ENCODE measurements at regions of chr11 and their contacts with region 1.

Region 1: DNA sequence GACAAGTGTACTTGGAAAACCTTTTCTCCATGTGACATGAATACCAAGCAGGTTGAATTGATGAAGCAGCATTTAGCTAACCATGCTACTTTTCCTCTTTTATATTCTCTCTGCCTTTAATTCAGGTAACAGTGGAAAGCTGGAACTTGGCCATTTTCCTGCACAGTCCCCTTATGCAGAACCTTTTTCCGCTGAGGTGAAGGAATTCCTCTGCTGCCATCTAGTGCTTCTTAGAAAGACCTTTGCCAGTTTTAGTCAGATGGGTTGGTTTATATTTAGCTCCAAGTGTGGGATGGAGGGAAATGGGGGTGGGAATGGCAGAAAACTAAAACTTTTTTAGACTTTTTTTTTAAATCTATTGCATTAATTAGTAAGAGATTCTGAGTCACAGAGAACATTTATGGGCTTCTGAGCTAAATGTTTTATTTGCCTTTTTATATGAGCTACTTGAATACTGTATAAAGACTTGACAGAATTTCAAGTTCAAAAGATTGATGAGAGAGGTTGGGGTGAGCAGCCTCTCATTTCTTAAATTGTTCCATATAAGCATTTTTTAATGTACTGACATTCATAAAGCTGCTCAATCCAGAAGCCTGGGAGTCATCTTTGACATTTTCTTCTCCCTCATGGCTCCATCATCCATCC is 153.9 kb upstream of the ZC3H12C start:
- DNase-seq: peak; percentile 86
- H3K4me3 Mint-ChIP-seq: no peak overlapping the region
- H3K27ac Mint-ChIP-seq: no peak overlapping the region
- H3K4me1 Mint-ChIP-seq: peaks cover 14% of the 10 kb centered on the region
- H3K27me3 Mint-ChIP-seq: no peaks in the 10 kb centered on the region
- CTCF ChIP-seq: peak; percentile 64

Region 2: GRCh38 chr11:108654994-108655631 is 1284.2 kb before region 1 on chr11:
- CTCF ChIA-PET with region 1: interaction called, 5 read pairs
- POLR2A ChIA-PET with region 1: no interaction called
- intact Hi-C with region 1: loop called (anchors 2 kb)
- DNase-seq: peak; percentile 74
- H3K4me3 Mint-ChIP-seq: no peak overlapping the region
- H3K27ac Mint-ChIP-seq: no peak overlapping the region
- H3K4me1 Mint-ChIP-seq: no peaks in the 10 kb centered on the region
- H3K27me3 Mint-ChIP-seq: no peaks in the 10 kb centered on the region
- CTCF ChIP-seq: peak; percentile 79

Region 3: DNA sequence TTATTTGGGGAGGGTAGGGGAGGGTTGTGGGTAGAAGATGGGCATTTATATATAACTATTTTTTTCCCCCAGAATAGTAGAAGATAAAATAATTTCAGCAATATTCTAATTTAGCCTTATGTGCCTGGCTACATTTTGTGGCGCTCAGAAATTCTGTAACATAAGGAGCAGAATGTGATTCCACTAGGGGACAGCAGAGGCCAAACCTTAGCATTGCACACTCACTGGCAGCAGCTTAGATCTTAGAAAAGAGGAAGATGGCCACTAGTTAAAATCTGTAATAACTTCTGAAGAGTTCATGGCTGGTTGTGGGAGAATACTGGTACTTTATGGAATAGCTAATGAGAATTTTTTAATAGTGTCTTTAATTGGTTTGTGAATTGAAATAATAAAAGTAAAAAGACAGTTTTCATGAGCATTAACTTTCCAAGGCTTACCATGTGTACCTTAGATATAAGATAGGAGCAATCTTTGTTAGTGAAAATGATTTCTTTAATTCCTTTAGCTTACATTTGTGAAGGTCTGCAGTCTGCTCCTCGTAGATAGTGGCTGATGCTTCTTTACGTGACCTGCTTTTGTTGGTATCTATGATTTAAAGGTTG is 1241.3 kb before region 1 on chr11:
- CTCF ChIA-PET with region 1: interaction called, 40 read pairs
- POLR2A ChIA-PET with region 1: interaction called, 34 read pairs
- intact Hi-C with region 1: loop called (anchors 1 kb)
- DNase-seq: peak; percentile 78
- H3K4me3 Mint-ChIP-seq: no peak overlapping the region
- H3K27ac Mint-ChIP-seq: peak overlapping the region; percentile 82
- H3K4me1 Mint-ChIP-seq: peaks cover 17% of the 10 kb centered on the region
- H3K27me3 Mint-ChIP-seq: no peaks in the 10 kb centered on the region
- CTCF ChIP-seq: peak; percentile 93

Region 4: DNA sequence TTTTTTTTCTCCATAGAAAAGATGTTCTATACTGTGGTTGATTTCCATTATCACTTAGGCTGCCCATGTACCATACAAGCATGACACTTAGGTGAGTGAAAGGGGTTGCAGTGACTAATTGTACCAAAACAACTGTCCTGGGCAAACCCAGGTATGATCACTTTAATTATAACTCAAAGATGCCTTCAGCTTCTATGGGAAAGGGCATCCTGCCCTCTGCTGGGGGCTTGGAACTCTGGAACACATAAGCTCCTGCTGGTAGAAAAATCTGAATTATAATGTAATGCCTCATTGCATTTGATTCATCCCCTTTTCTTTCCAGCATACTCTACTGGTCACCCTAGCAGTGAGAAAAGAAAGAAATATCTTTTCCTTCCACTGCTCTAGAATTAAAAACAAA is 1068.1 kb before region 1 on chr11:
- CTCF ChIA-PET with region 1: interaction called, 5 read pairs
- POLR2A ChIA-PET with region 1: no interaction called
- intact Hi-C with region 1: loop called (anchors 5 kb)
- DNase-seq: peak; percentile 67
- H3K4me3 Mint-ChIP-seq: no peak overlapping the region
- H3K27ac Mint-ChIP-seq: peak overlapping the region; percentile 29
- H3K4me1 Mint-ChIP-seq: peaks cover 32% of the 10 kb centered on the region
- H3K27me3 Mint-ChIP-seq: no peaks in the 10 kb centered on the region
- CTCF ChIP-seq: peak; percentile 53

Region 5: DNA sequence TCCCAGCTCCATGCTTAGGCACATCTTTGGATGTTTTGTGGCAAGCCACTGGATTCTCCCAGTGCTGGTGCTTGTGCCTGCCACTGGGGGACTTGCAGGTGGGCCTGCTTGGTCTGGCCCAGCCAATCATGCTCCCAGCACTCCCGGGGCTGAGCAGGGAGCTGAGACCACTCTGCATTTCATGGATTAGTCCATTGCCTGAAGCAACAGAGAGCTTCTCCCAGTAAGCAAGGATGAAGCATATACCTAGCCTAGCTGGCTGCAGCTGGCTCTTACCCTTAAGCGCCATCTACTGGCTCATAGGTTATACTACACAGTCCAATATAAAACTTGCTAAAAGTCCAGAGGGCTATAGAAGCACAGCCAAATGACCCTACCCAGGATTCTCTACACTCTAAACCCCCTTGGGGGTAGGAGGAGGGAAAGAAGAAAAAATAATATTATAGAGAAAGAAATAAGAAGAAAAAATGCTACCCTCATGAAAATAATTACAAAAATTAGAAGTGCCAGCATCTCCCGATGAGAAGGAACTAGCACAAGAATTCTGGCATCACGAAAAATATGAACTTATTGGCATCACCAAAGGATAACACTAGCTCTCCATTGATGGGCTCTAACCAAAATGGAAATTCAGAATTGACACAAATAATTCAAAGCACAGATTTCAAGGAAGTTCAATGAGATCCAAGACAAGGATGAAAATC is 242.0 kb before region 1 on chr11:
- CTCF ChIA-PET with region 1: no interaction called
- POLR2A ChIA-PET with region 1: no interaction called
- intact Hi-C with region 1: loop called (anchors 5 kb)
- DNase-seq: peak; percentile 69
- H3K4me3 Mint-ChIP-seq: no peak overlapping the region
- H3K27ac Mint-ChIP-seq: peak overlapping the region; percentile 72
- H3K4me1 Mint-ChIP-seq: peaks cover 6% of the 10 kb centered on the region
- H3K27me3 Mint-ChIP-seq: no peaks in the 10 kb centered on the region
- CTCF ChIP-seq: peak; percentile 60

Region 6: DNA sequence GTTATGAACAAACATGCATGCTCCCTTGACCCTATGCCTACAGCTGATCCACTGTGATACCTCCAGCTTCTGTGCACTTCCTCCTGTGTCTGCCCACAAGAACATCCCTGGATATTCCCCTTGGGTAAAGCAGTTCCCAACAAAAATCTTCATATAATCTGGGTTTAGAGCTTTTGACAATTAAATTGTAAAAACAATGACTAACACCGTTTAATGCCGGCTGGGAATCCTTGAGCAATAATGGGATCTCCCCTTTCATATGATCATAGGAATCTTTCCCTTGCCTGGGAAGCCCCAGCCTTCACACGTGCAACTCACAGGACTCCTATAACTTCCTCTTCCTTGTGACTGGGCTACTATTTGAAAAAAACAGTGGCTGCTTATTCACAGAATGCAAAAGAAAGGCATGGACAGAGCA is 147.6 kb after region 1 on chr11:
- CTCF ChIA-PET with region 1: interaction called, 4 read pairs
- POLR2A ChIA-PET with region 1: interaction called, 148 read pairs
- intact Hi-C with region 1: no loop called
- DNase-seq: peak; percentile 86
- H3K4me3 Mint-ChIP-seq: peak overlapping the region; percentile 26
- H3K27ac Mint-ChIP-seq: peak overlapping the region; percentile 92
- H3K4me1 Mint-ChIP-seq: peaks cover 26% of the 10 kb centered on the region
- H3K27me3 Mint-ChIP-seq: no peaks in the 10 kb centered on the region
- CTCF ChIP-seq: no peak

Measured in MCF 10A (cell line).